ENCODE measurements at regions of chr1 and their contacts with region 1.

Region 1: DNA sequence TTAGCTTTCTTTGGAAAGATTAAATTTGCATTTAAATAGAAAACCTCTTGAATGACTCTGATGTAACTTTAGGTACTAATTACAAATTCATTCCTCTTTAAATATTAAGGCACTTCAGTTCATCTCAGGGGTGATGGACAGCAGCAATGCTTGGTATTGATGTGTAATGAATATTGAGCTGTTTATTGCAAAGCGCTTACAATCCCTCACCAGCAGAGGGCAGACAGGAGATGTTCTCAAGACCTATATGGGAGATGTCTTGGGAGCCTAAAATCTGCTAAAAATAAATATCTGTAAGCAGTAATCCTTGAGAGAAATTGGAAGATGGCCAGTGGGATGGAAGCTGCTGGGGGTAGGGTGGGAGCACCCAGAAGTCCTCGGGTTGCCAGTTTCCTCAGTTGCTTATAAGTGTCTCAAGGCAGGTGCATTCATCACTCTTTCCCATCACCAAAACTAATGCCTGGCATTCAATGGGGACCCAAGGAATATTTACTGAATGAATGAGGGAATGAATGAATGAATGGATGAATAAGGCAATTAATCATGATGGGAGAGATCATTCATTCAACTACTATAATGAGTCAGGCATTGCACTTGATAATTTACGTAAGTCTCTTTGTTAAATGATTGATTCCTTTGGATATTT is 2.3 kb downstream of the KLHDC8A start:
- DNase-seq: peak; percentile 63
- H3K4me3 ChIP-seq: no peak overlapping the region
- H3K27ac ChIP-seq: no peak overlapping the region
- H3K4me1 ChIP-seq: no peaks in the 10 kb centered on the region
- H3K27me3 ChIP-seq: peaks cover 4 to 30% of the 10 kb centered on the region in 2 experiments
- CTCF ChIP-seq: peak; percentile 66 to 69
- POLR2A ChIP-seq: no peak

Region 2: DNA sequence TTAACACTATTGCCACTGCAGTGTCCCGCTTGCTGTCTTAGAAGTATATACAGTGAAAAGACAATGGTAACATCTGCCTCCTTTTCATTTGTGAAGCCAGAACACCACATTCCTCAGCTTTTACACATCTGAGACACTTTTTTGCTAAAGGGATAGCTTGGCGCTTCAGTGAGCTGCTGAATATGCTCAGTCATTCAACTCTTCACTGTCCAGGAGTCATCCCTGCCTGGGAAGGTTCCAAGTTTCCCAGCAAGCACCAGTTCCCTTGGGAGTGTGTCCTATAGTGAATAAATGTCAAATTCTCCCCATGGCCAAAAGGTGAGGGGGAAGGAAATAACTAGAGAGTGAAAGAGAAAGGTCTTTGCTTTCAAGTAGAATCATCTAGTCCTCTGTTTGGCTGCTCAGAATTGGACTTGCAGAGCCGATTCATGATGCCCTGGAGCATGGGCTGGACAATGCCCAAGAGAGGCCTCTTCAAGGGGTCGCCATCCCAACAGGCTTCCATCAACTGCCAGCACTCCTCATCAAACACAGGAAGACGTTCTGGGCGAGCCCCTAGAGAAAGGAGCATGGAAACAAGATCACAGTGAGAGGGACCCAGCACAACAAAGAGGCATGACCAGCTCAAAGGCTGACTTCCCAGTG is 207.1 kb before region 1 on chr1:
- CTCF ChIA-PET with region 1: no interaction called
- POLR2A ChIA-PET with region 1: no interaction called
- dilution Hi-C with region 1: no loop called
- intact Hi-C with region 1: no loop called
- DNase-seq: no peak
- H3K4me3 ChIP-seq: no peak overlapping the region
- H3K27ac ChIP-seq: no peak overlapping the region
- H3K4me1 ChIP-seq: peaks cover 19% of the 10 kb centered on the region
- H3K27me3 ChIP-seq: no peaks in the 10 kb centered on the region
- CTCF ChIP-seq: no peak
- POLR2A ChIP-seq: no peak

Region 3: DNA sequence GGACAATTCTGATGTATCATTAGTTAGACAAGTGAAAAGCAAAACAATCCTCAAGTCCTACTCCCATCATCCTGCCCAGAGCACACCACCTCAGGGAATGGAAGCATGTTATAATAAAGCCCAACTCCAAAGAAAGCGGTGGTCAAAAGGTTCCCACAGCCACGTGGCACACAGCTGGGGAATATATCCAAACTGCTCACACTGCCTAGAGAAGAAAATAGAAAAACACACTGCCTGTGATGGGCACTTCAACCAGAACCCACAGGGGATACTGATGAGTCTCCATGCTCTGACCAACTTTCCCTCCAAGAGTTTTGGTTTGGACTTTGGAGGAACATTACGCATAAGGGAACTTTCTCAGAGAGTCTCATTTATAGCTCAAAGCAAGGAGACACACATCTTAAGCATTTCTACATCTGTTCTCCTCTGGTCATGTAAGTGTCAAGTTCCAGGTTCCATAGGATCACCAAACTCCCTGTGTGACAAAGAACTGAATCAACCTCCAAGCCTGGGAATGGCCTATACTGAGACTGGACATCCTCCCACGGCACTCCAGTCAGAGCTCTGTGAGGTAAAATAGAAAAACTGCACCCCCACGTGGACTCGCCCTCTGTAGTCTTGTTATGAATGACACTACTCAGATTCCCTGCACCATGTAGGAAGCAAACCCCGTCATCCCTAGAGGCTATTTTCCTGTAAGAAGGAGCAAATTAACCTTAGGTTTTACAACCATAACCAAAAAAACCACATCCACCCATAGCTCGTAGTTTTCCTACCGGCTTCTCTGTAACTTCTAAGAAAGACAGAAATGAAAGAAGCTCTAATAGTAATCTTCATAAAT is 155.1 kb before region 1 on chr1:
- CTCF ChIA-PET with region 1: no interaction called
- POLR2A ChIA-PET with region 1: no interaction called
- dilution Hi-C with region 1: no loop called
- intact Hi-C with region 1: no loop called
- DNase-seq: no peak
- H3K4me3 ChIP-seq: no peak overlapping the region
- H3K27ac ChIP-seq: no peak overlapping the region
- H3K4me1 ChIP-seq: no peaks in the 10 kb centered on the region
- H3K27me3 ChIP-seq: no peaks in the 10 kb centered on the region
- CTCF ChIP-seq: no peak
- POLR2A ChIP-seq: no peak

Region 4: GRCh38 chr1:205273551-205273982 is 80.8 kb before region 1 on chr1:
- CTCF ChIA-PET with region 1: interaction called, 71 read pairs
- POLR2A ChIA-PET with region 1: no interaction called
- dilution Hi-C with region 1: no loop called
- intact Hi-C with region 1: no loop called
- DNase-seq: peak; percentile 69
- H3K4me3 ChIP-seq: no peak overlapping the region
- H3K27ac ChIP-seq: no peak overlapping the region
- H3K4me1 ChIP-seq: peaks cover 18% of the 10 kb centered on the region
- H3K27me3 ChIP-seq: no peaks in the 10 kb centered on the region
- CTCF ChIP-seq: peak; percentile 97 to 98
- POLR2A ChIP-seq: no peak

Region 5: GRCh38 chr1:205344066-205344928 is 10.1 kb before region 1 on chr1:
- CTCF ChIA-PET with region 1: interaction called, 12 read pairs
- POLR2A ChIA-PET with region 1: no interaction called
- dilution Hi-C with region 1: no loop called
- intact Hi-C with region 1: no loop called
- DNase-seq: no peak
- H3K4me3 ChIP-seq: no peak overlapping the region
- H3K27ac ChIP-seq: no peak overlapping the region
- H3K4me1 ChIP-seq: no peaks in the 10 kb centered on the region
- H3K27me3 ChIP-seq: peaks cover 53 to 70% of the 10 kb centered on the region in 2 experiments
- CTCF ChIP-seq: no peak
- POLR2A ChIP-seq: no peak

Region 6: GRCh38 chr1:205375835-205376545 is 21.6 kb after region 1 on chr1:
- CTCF ChIA-PET with region 1: interaction called, 17 read pairs
- POLR2A ChIA-PET with region 1: no interaction called
- dilution Hi-C with region 1: no loop called
- intact Hi-C with region 1: no loop called
- DNase-seq: no peak
- H3K4me3 ChIP-seq: no peak overlapping the region
- H3K27ac ChIP-seq: no peak overlapping the region
- H3K4me1 ChIP-seq: no peaks in the 10 kb centered on the region
- H3K27me3 ChIP-seq: peaks cover 31 to 36% of the 10 kb centered on the region in 2 experiments
- CTCF ChIP-seq: no peak
- POLR2A ChIP-seq: no peak

Region 7: DNA sequence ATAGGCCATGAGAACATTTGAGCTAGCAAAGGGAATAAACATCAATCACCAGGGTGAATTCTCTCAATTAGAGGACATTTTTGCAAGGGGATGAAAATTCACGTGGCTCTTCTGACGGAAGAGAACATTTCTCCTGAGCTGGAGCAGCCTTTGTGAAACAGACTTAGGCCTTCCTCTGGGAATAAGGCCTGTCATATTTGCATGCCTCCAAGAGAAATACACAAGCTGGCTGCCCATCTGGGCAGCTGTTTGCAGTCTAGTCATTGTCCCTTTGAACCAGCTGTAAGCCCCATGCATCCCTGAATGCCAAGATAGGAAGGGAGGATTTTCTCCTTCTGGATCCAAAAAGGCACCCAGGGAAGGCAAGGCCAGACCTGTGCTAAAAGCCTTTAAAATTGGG is 61.9 kb after region 1 on chr1:
- CTCF ChIA-PET with region 1: interaction called, 11 read pairs
- POLR2A ChIA-PET with region 1: no interaction called
- dilution Hi-C with region 1: no loop called
- intact Hi-C with region 1: no loop called
- DNase-seq: no peak
- H3K4me3 ChIP-seq: no peak overlapping the region
- H3K27ac ChIP-seq: no peak overlapping the region
- H3K4me1 ChIP-seq: no peaks in the 10 kb centered on the region
- H3K27me3 ChIP-seq: peaks cover 13 to 17% of the 10 kb centered on the region in 2 experiments
- CTCF ChIP-seq: no peak
- POLR2A ChIP-seq: no peak

Region 8: DNA sequence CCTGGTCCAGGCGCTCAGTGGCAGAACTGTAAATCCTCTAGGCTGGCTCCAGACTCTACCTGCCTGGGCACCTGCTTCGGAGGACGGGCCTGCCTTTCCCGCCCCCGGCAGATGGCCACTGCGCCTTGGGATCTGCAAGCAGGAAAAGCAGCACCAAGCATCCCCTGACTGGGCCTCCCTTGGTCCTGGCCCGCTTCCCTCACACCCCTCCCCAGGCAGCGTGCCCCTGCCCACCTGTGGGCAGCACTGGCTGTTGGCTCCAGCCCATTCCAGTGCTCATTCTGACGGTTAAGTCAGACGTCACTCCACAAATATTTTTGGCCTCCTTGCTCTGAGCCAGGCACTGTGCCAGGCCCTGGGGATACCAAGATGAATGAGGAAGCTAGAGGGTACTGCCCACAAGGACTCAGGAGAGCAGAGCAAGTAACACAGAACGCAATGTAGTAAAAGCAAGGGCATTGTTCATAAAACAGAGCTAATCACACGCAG is 123.4 kb after region 1 on chr1:
- CTCF ChIA-PET with region 1: interaction called, 243 read pairs
- POLR2A ChIA-PET with region 1: no interaction called
- dilution Hi-C with region 1: no loop called
- intact Hi-C with region 1: no loop called
- DNase-seq: no peak
- H3K4me3 ChIP-seq: no peak overlapping the region
- H3K27ac ChIP-seq: no peak overlapping the region
- H3K4me1 ChIP-seq: no peaks in the 10 kb centered on the region
- H3K27me3 ChIP-seq: peaks cover 3 to 5% of the 10 kb centered on the region in 2 experiments
- CTCF ChIP-seq: no peak
- POLR2A ChIP-seq: no peak

Region 9: GRCh38 chr1:205693421-205693991 is 339.1 kb after region 1 on chr1:
- CTCF ChIA-PET with region 1: no interaction called
- POLR2A ChIA-PET with region 1: no interaction called
- dilution Hi-C with region 1: no loop called
- intact Hi-C with region 1: no loop called
- DNase-seq: no peak
- H3K4me3 ChIP-seq: no peak overlapping the region
- H3K27ac ChIP-seq: no peak overlapping the region
- H3K4me1 ChIP-seq: no peaks in the 10 kb centered on the region
- H3K27me3 ChIP-seq: no peaks in the 10 kb centered on the region
- CTCF ChIP-seq: no peak
- POLR2A ChIP-seq: no peak

Region 10: GRCh38 chr1:205711104-205712020 is 357.0 kb after region 1 on chr1:
- CTCF ChIA-PET with region 1: no interaction called
- POLR2A ChIA-PET with region 1: no interaction called
- dilution Hi-C with region 1: no loop called
- intact Hi-C with region 1: no loop called
- DNase-seq: peak; percentile 88
- H3K4me3 ChIP-seq: no peak overlapping the region
- H3K27ac ChIP-seq: peak overlapping the region; percentile 44
- H3K4me1 ChIP-seq: peaks cover 12% of the 10 kb centered on the region
- H3K27me3 ChIP-seq: no peaks in the 10 kb centered on the region
- CTCF ChIP-seq: peak; percentile 67 to 70
- POLR2A ChIP-seq: no peak